ENCODE measurements at regions of chr4 and their contacts with region 1.

Region 1: GRCh38 chr4:67909905-67910584 is 26.2 kb upstream of the TMPRSS11D start:
- DNase-seq: no peak
- H3K4me3 Mint-ChIP-seq: no peak overlapping the region
- H3K27ac Mint-ChIP-seq: no peak overlapping the region
- H3K4me1 Mint-ChIP-seq: no peaks in the 10 kb centered on the region
- H3K27me3 Mint-ChIP-seq: peaks cover 2% of the 10 kb centered on the region

Region 2: GRCh38 chr4:67871867-67872266 is 38.2 kb before region 1 on chr4:
- CTCF ChIA-PET with region 1: no interaction called
- intact Hi-C with region 1: loop called (anchors 1 kb)
- DNase-seq: no peak
- H3K4me3 Mint-ChIP-seq: no peak overlapping the region
- H3K27ac Mint-ChIP-seq: no peak overlapping the region
- H3K4me1 Mint-ChIP-seq: no peaks in the 10 kb centered on the region
- H3K27me3 Mint-ChIP-seq: peaks cover 9% of the 10 kb centered on the region